ENCODE measurements at regions of chr17 and their contacts with region 1.

Region 1: GRCh38 chr17:57849874-57850754 is at the start of gene MRPS23:
- DNase-seq: peak; percentile 96
- CTCF ChIP-seq: no peak

Region 2: DNA sequence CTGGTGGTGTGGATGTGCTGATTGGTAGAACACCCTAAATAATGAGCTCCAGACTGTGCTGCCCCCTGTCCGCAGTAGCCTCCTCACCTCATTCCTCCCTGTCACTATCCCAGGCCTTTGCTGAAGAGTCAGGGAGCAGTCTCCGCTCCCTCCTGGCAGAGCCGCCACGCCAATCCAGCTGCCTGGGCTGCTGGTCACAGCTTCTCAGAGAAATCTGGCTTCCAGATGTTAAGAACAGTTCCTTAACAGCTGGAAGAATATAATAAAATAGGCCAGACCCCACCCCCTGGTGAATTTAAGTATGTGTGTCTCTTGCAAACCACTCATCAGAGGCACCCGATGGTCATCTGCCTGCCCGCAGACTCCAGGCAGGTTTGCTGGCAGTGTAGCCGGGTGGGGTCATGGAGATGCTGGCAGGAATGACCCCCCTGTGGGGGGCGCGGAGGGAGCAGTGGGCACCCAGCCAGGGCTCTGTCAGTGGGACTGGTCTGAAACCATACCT is 266.0 kb before region 1 on chr17:
- CTCF ChIA-PET with region 1: no interaction called
- POLR2A ChIA-PET with region 1: no interaction called
- DNase-seq: no peak
- CTCF ChIP-seq: no peak

Region 3: GRCh38 chr17:57833179-57833939 is 16.8 kb before region 1 on chr17:
- CTCF ChIA-PET with region 1: interaction called, 74 read pairs
- POLR2A ChIA-PET with region 1: no interaction called
- DNase-seq: peak; percentile 69
- CTCF ChIP-seq: peak; percentile 90